IMR-90 (cell line): ENCODE measurements at regions of chr9 and their contacts with region 1.

Region 1: GRCh38 chr9:12719431-12719830 is 26.2 kb downstream of the TYRP1 start:
- DNase-seq: peak; percentile 69
- ATAC-seq: peak; percentile 71
- H3K4me3 ChIP-seq: no peak overlapping the region
- H3K27ac ChIP-seq: no peak overlapping the region
- H3K4me1 ChIP-seq: no peaks in the 10 kb centered on the region
- H3K27me3 ChIP-seq: no peaks in the 10 kb centered on the region
- CTCF ChIP-seq: peak; percentile 71
- POLR2A ChIP-seq: no peak
- RAD21 ChIP-seq: peak; percentile 65

Region 2: GRCh38 chr9:12813960-12814876 is 94.8 kb after region 1 on chr9:
- CTCF ChIA-PET with region 1: interaction called, 10 read pairs
- POLR2A ChIA-PET with region 1: no interaction called
- dilution Hi-C with region 1: no loop called
- in situ Hi-C with region 1: no loop called
- intact Hi-C with region 1: no loop called
- DNase-seq: peak; percentile 100
- ATAC-seq: peak; percentile 79
- H3K4me3 ChIP-seq: peak overlapping the region; percentile 19; the same call in 1 of the 2 replicates
- H3K27ac ChIP-seq: peak overlapping the region; percentile 97
- H3K4me1 ChIP-seq: peaks cover 20% of the 10 kb centered on the region
- H3K27me3 ChIP-seq: no peaks in the 10 kb centered on the region
- CTCF ChIP-seq: peak; percentile 50
- POLR2A ChIP-seq: peak; percentile 52; the same call in 1 of the 2 replicates
- RAD21 ChIP-seq: no peak

Region 3: GRCh38 chr9:13033959-13034693 is 314.7 kb after region 1 on chr9:
- CTCF ChIA-PET with region 1: no interaction called
- POLR2A ChIA-PET with region 1: no interaction called
- dilution Hi-C with region 1: no loop called
- in situ Hi-C with region 1: no loop called
- intact Hi-C with region 1: loop called (anchors 1 kb)
- DNase-seq: peak; percentile 54
- ATAC-seq: peak; percentile 99
- H3K4me3 ChIP-seq: no peak overlapping the region
- H3K27ac ChIP-seq: no peak overlapping the region
- H3K4me1 ChIP-seq: no peaks in the 10 kb centered on the region
- H3K27me3 ChIP-seq: peaks cover 3% of the 10 kb centered on the region; the same call in 1 of the 2 replicates
- CTCF ChIP-seq: peak; percentile 87
- POLR2A ChIP-seq: no peak
- RAD21 ChIP-seq: peak; percentile 91

Region 4: GRCh38 chr9:13351778-13352386 is 632.5 kb after region 1 on chr9:
- CTCF ChIA-PET with region 1: no interaction called
- POLR2A ChIA-PET with region 1: no interaction called
- dilution Hi-C with region 1: no loop called
- in situ Hi-C with region 1: no loop called
- intact Hi-C with region 1: loop called (anchors 10 kb)
- DNase-seq: peak; percentile 65
- ATAC-seq: peak; percentile 75
- H3K4me3 ChIP-seq: no peak overlapping the region
- H3K27ac ChIP-seq: no peak overlapping the region
- H3K4me1 ChIP-seq: peaks cover 2% of the 10 kb centered on the region; the same call in 1 of the 2 replicates
- H3K27me3 ChIP-seq: no peaks in the 10 kb centered on the region
- CTCF ChIP-seq: peak; percentile 73
- POLR2A ChIP-seq: no peak
- RAD21 ChIP-seq: peak; percentile 65

Region 5: DNA sequence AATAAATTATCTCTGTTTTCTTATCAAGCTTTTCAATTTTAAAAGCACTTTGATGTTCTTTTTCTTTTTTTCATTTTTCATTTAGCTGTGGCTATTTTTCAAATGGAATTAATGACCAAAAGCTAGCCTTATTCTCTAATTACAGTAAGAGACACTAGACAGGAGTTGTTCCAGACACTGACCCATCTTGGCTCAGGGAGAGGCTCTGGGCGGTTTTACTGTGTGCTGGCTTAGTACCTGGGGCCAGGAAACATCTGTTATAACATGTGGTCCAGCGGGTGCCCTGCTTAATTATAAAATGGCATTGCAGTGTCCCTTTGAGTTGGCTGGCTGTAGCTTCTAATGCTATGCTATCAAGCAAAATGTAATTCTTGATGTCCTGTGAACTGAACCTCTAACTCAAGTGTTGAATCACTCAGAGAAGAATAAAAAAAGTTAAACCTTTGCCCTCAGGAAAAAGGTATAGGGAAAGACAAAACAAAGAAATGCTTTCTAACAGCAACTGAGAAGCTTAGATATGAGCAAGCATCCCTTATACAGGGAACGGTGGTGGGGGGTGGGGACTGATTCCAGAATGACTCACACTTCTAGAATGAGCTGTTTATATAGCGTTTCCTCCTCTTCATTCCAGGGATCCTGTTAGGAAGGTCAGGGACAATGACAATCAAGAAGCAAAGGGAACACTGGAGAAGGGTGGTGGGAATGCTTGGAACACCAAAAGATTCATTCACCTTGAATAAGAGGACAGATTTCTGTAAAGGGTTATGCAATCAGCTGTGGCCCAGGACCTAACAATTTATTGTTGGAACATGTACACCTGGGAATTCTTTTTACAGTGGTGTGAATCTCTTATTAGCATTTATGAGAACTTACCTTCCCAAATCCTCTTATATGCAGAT is 1653.3 kb after region 1 on chr9:
- CTCF ChIA-PET with region 1: no interaction called
- POLR2A ChIA-PET with region 1: interaction called, 12 read pairs
- dilution Hi-C with region 1: no loop called
- in situ Hi-C with region 1: no loop called
- intact Hi-C with region 1: no loop called
- DNase-seq: peak; percentile 69
- ATAC-seq: peak; percentile 93
- H3K4me3 ChIP-seq: no peak overlapping the region
- H3K27ac ChIP-seq: no peak overlapping the region
- H3K4me1 ChIP-seq: peaks cover 7% of the 10 kb centered on the region
- H3K27me3 ChIP-seq: peaks cover 8% of the 10 kb centered on the region
- CTCF ChIP-seq: no peak
- POLR2A ChIP-seq: no peak
- RAD21 ChIP-seq: no peak